Sigmoid colon (tissue), 7 donors: ENCODE measurements at regions of chr19 and their contacts with region 1.

Region 1: DNA sequence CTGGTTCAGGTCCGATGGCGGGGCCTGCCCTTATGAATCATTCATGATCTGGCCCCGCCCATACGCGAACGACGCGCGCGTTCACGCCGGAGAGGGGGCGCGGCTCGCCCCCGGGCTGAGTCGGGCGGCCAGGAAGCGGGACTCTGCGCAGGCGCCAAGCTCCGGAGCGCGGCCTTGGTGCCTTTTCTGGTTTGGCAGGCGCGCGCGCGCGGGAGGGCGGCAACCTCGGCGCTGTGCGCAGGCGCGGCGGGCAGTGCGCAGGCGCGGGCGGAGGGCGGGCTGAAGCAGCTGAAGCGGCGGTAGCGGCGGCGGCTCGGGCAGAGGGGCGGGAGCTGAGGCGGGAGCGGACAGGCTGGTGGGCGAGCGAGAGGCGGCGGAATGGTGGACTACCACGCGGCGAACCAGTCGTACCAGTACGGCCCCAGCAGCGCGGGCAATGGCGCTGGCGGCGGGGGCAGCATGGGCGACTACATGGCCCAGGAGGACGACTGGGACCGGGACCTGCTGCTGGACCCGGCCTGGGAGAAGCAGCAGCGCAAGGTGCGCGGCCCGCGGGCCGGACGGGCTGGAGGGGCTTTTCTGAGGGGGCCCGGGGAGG is at the start of gene ACTN4:
- DNase-seq: peak; percentile 99
- H3K4me3 ChIP-seq: peak within 1 kb of the TSS; percentile 95 to 100 (median 98)
- H3K27ac ChIP-seq: peak within 1 kb of the TSS; percentile 96 to 100 (median 98)
- H3K4me1 ChIP-seq: peaks cover 0 to 40% (median 33%) of the 10 kb centered on the region in 4 donors
- H3K27me3 ChIP-seq: no peaks in the 10 kb centered on the region
- CTCF ChIP-seq: no peak
- EP300 ChIP-seq: no peak
- POLR2A ChIP-seq: peak; percentile 96 to 97
- total RNA-seq, gene ACTN4: 131 to 328 (median 197) TPM

Region 2: DNA sequence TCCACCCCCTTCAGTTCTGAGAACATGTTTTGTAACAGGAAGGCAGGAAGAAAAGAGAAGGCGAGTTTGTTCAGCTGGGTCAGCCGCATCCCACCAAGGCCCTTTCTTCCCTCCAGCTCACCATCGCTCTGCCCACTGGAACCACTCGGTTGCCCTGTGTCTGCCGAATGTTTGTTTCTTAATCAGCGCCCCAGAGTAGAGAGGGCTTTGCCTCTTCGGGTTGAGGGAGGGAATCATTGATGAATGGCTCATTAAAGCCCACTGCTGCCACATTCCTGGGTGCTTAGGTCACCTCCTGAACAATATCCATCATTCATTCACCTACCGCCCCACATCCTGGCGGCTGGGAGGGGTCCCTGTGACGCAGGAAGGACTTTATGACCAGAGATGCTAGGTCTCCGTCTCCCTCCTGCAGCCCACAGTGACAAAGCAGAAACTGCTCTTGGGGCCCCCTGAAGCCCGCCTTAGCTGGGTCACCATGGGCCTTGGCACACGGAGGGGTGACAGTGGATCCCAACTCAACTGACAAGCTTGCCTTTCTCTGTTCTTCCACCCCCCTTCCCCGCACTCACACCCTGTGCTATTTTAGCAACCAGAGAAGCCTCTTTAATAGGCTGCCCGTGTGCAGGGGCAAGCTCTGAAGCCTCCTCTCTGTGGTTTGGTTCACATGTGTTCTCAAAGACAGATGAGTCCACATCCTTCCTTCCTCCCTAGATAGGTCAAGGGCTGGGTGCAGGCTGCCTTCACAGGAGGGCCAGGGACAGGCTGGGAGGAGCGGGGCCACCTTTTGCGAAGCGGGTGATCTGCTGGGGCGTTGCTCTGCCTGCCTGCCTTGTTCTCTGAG is 46.1 kb after region 1 on chr19:
- intact Hi-C with region 1: loop called (anchors 2 kb)
- DNase-seq: no peak
- H3K4me3 ChIP-seq: no peak overlapping the region
- H3K27ac ChIP-seq: peak overlapping the region; percentile 91 to 97 (median 96)
- H3K4me1 ChIP-seq: peaks cover 0 to 98% (median 93%) of the 10 kb centered on the region in 4 donors
- H3K27me3 ChIP-seq: no peaks in the 10 kb centered on the region
- CTCF ChIP-seq: no peak
- EP300 ChIP-seq: no peak
- POLR2A ChIP-seq: no peak

Region 3: GRCh38 chr19:38711726-38712153 is 64.3 kb after region 1 on chr19:
- intact Hi-C with region 1: loop called (anchors 5 kb)
- DNase-seq: peak; percentile 90
- H3K4me3 ChIP-seq: no peak overlapping the region
- H3K27ac ChIP-seq: peak overlapping the region; percentile 78 to 97 (median 86)
- H3K4me1 ChIP-seq: peaks cover 0 to 90% (median 85%) of the 10 kb centered on the region in 4 donors
- H3K27me3 ChIP-seq: no peaks in the 10 kb centered on the region
- CTCF ChIP-seq: no peak
- EP300 ChIP-seq: peak in 1 of 4 donors; percentile 86
- POLR2A ChIP-seq: no peak

Region 4: DNA sequence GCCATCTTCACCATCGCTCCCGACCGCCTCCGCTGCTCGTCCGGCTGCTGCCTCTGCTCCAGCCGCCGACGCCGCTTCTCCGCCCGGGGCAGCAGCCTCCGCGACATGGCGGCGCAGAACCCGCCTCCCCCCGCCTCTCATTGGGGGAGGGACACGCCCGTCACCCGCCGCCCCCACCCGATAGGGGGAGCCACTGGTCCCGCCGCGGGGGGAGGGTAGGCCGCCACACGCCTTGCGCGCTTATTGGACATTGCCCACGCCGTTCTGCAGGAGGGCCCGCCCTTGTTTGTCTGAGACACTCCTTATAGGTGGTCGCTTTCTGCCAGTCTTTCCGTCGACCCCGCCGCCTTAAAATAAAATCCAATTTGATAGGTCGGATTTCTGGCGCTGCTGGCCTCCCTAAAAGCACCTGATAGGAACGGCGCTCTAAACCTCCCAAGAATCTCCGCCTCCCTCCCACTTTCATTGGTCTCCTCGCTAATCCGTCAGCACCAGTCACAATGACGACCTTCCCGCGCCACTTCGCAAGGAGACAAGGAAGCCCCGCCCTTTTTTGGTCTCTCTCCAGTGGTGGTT is 202.5 kb after region 1 on chr19 and contains the start of gene HNRNPL:
- intact Hi-C with region 1: loop called (anchors 5 kb)
- DNase-seq: peak; percentile 100
- H3K4me3 ChIP-seq: peak within 1 kb of the TSS; percentile 73 to 100 (median 98)
- H3K27ac ChIP-seq: peak within 1 kb of the TSS; percentile 100
- H3K4me1 ChIP-seq: peaks cover 0 to 59% (median 49%) of the 10 kb centered on the region in 4 donors
- H3K27me3 ChIP-seq: no peaks in the 10 kb centered on the region
- CTCF ChIP-seq: no peak
- EP300 ChIP-seq: peak in 1 of 4 donors; percentile 10
- POLR2A ChIP-seq: peak; percentile 88 to 89
- total RNA-seq, gene HNRNPL: 140 to 201 (median 171) TPM

Region 5: GRCh38 chr19:38899447-38900219 is 252.2 kb after region 1 on chr19 and contains the starts of genes NFKBIB and SIRT2:
- intact Hi-C with region 1: loop called (anchors 5 kb)
- DNase-seq: peak; percentile 100
- H3K4me3 ChIP-seq: peak within 1 kb of the TSS; percentile 58 to 90 (median 66)
- H3K27ac ChIP-seq: peak within 1 kb of the TSS; percentile 90 to 95 (median 92)
- H3K4me1 ChIP-seq: peaks cover 0 to 51% (median 37%) of the 10 kb centered on the region in 4 donors
- H3K27me3 ChIP-seq: no peaks in the 10 kb centered on the region
- CTCF ChIP-seq: no peak
- EP300 ChIP-seq: peak in 1 of 4 donors; percentile 63
- POLR2A ChIP-seq: peak; percentile 44 to 69
- total RNA-seq, gene NFKBIB: 13.8 to 20.2 (median 16.9) TPM
- total RNA-seq, gene SIRT2: 65.5 to 92.7 (median 85.2) TPM